PC-9 (cell line): ENCODE measurements at regions of chr10 and their contacts with region 1.

Region 1: GRCh38 chr10:2927958-2928840 is 139.1 kb upstream of the PFKP start:
- DNase-seq: peak; percentile 39 to 66
- H3K4me3 ChIP-seq: no peak overlapping the region
- H3K27ac ChIP-seq: no peak overlapping the region
- H3K4me1 ChIP-seq: no peaks in the 10 kb centered on the region
- H3K27me3 ChIP-seq: peaks cover 74% of the 10 kb centered on the region
- CTCF ChIP-seq: peak; percentile 75

Region 2: DNA sequence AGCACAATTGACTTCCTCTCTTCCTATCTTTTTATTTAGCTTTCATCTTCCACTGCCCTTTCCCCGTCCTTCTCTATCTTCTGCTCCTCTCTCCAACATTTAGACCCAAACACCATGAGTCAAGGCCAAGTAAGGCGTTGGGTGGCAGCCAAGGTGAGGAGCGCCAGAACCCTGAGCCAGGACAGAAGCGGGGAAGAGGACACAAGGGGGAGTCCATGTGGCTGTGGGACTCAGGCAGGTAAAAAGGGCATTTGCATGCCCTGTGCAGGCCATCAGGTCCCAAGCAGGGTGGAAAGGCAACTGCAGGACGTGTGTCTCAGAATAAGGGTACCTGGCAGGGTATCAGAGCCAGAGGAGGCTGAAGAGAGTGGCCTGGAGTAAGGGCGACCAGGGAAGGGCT is 53.2 kb before region 1 on chr10:
- CTCF ChIA-PET with region 1: no interaction called
- POLR2A ChIA-PET with region 1: no interaction called
- intact Hi-C with region 1: no loop called
- DNase-seq: no peak
- H3K4me3 ChIP-seq: no peak overlapping the region
- H3K27ac ChIP-seq: no peak overlapping the region
- H3K4me1 ChIP-seq: no peaks in the 10 kb centered on the region
- H3K27me3 ChIP-seq: peaks cover 15% of the 10 kb centered on the region
- CTCF ChIP-seq: no peak

Region 3: DNA sequence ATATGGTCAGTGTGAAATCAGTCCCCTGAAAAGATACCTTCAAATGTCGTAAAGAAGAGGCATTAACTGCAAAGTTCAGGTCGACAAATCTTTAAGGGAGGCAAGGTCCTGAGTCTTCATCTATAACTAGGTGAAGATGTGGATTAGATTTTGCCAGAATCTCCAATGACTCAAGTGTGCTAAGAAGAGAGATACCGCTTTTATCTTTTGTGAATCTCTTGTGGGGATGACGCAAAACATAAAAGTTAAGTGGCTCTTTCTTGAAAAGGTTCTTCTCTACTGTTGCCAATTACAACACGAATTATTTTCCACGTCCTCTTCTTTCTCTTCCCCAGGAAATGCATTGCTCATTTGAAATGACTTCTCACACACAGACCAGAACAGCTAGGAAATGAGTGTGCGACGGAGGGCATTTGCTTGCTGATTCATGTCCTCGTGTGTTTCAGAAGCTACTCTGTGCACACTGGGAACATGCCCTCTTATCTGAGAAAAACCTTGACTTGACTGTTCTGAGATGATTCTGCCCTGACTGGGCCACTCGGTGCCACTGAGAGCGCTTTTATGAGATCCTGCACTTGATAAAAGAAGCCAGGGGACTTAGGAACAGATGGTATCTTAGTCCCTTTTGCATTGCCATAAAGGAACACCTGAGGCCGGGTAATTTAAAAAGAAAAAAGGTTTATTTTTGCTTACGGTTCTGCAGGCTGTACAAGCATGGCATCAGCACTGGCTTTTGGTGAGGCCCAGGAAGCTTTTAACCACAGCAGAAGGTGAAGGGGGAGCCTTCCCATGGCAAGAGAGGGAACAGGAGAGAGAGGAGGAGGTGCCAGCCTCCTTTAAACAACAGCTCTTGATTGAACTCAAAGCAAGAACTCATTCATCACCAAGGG is 30.3 kb before region 1 on chr10:
- CTCF ChIA-PET with region 1: no interaction called
- POLR2A ChIA-PET with region 1: no interaction called
- intact Hi-C with region 1: no loop called
- DNase-seq: no peak
- H3K4me3 ChIP-seq: no peak overlapping the region
- H3K27ac ChIP-seq: no peak overlapping the region
- H3K4me1 ChIP-seq: no peaks in the 10 kb centered on the region
- H3K27me3 ChIP-seq: peaks cover 92% of the 10 kb centered on the region
- CTCF ChIP-seq: no peak

Region 4: GRCh38 chr10:2978111-2978510 is 49.9 kb after region 1 on chr10:
- CTCF ChIA-PET with region 1: interaction called, 5 read pairs
- POLR2A ChIA-PET with region 1: no interaction called
- intact Hi-C with region 1: loop called (anchors 5 kb)
- DNase-seq: peak in 1 of 2 experiments; percentile 35
- H3K4me3 ChIP-seq: no peak overlapping the region
- H3K27ac ChIP-seq: no peak overlapping the region
- H3K4me1 ChIP-seq: no peaks in the 10 kb centered on the region
- H3K27me3 ChIP-seq: peaks cover 5% of the 10 kb centered on the region; the same call in 1 of the 2 replicates
- CTCF ChIP-seq: peak; percentile 59

Region 5: GRCh38 chr10:3036155-3037021 is 108.2 kb after region 1 on chr10:
- CTCF ChIA-PET with region 1: no interaction called
- POLR2A ChIA-PET with region 1: no interaction called
- intact Hi-C with region 1: no loop called
- DNase-seq: no peak
- H3K4me3 ChIP-seq: no peak overlapping the region
- H3K27ac ChIP-seq: no peak overlapping the region
- H3K4me1 ChIP-seq: no peaks in the 10 kb centered on the region
- H3K27me3 ChIP-seq: peaks cover 55% of the 10 kb centered on the region
- CTCF ChIP-seq: no peak

Region 6: DNA sequence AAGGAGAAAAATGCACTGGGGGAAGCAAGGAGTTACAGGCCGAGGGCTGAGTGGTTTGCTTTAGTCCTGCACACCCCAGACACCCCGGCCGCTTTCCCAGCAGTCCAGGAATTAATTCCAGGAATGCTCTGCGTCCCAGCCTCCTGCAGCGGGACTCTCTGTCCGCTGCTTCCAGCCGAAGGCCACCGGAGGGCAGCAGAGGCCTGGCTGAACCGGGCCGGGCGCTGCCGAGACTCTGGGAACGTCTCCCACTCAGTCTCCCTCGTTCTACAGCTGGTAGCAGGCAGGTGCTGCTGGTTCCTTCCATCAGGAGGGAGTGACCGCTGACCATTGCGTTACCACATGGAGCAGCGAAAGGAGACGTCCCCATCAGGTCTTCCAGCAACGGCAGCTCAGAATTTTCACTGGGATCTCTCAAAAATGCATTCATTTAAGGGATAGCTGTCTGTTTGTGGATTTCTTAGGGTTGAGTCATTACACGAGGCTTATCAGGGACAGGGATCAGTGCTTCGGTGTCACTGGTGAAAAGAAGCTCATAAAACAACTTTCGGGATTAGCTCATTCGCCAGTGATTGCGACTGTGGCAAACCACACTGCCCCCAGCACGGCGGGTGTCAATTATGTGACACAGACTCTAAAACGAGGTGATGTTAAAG is 269.3 kb after region 1 on chr10:
- CTCF ChIA-PET with region 1: no interaction called
- POLR2A ChIA-PET with region 1: no interaction called
- intact Hi-C with region 1: loop called (anchors 10 kb)
- DNase-seq: peak; percentile 85 to 86
- H3K4me3 ChIP-seq: peak overlapping the region; percentile 53; the same call in 1 of the 2 replicates
- H3K27ac ChIP-seq: peak overlapping the region; percentile 79
- H3K4me1 ChIP-seq: peaks cover 10% of the 10 kb centered on the region
- H3K27me3 ChIP-seq: no peaks in the 10 kb centered on the region
- CTCF ChIP-seq: peak; percentile 79

Region 7: GRCh38 chr10:3776796-3777571 is 848.8 kb after region 1 on chr10:
- CTCF ChIA-PET with region 1: no interaction called
- POLR2A ChIA-PET with region 1: no interaction called
- intact Hi-C with region 1: loop called (anchors 10 kb)
- DNase-seq: peak; percentile 74 to 96
- H3K4me3 ChIP-seq: no peak overlapping the region; the same call in 1 of the 2 replicates
- H3K27ac ChIP-seq: peak overlapping the region; percentile 87
- H3K4me1 ChIP-seq: peaks cover 67% of the 10 kb centered on the region
- H3K27me3 ChIP-seq: no peaks in the 10 kb centered on the region
- CTCF ChIP-seq: no peak

Region 8: GRCh38 chr10:3828404-3829155 is 900.4 kb after region 1 on chr10:
- CTCF ChIA-PET with region 1: no interaction called
- POLR2A ChIA-PET with region 1: no interaction called
- intact Hi-C with region 1: no loop called
- DNase-seq: no peak
- H3K4me3 ChIP-seq: no peak overlapping the region
- H3K27ac ChIP-seq: no peak overlapping the region
- H3K4me1 ChIP-seq: peaks cover 31% of the 10 kb centered on the region
- H3K27me3 ChIP-seq: no peaks in the 10 kb centered on the region
- CTCF ChIP-seq: no peak